ENCODE measurements at regions of chr12 and their contacts with region 1.

Region 1: DNA sequence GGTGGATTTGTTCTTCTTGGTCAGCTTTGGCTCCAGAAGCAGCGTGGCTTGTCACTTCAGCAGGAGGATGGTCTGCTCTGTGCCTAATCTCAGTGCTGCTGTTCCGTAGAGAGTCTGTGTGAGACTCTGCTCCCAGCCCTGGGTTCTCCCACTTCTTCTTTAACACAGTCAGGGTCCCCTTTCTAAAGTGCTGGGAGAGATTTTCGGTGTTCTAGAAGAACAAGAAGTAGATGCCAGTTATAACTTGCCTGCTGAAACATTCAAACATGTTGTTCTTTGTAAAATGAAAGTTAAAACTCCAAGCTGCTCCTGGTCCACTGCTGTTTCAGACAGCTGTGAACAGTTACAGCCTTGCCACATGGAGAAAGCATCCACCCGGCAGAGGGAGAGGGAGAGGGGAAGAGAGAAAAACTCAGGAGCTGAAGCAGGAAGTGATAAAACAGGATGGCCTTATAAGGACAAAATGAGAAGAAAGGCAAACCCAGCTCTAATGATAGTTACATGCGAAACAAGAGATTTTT is 55.2 kb upstream of the CERS5 start:
- DNase-seq: no peak
- H3K4me3 Mint-ChIP-seq: no peak overlapping the region
- H3K27ac Mint-ChIP-seq: no peak overlapping the region
- H3K4me1 Mint-ChIP-seq: no peaks in the 10 kb centered on the region
- H3K27me3 Mint-ChIP-seq: no peaks in the 10 kb centered on the region
- CTCF ChIP-seq: no peak

Region 2: GRCh38 chr12:50167041-50167828 is 55.1 kb before region 1 on chr12 and contains the start of gene CERS5:
- CTCF ChIA-PET with region 1: interaction called, 11 read pairs
- intact Hi-C with region 1: no loop called
- DNase-seq: peak; percentile 97
- H3K4me3 Mint-ChIP-seq: peak within 1 kb of the TSS; percentile 79
- H3K27ac Mint-ChIP-seq: peak within 1 kb of the TSS; percentile 12
- H3K4me1 Mint-ChIP-seq: peaks cover 9% of the 10 kb centered on the region
- H3K27me3 Mint-ChIP-seq: no peaks in the 10 kb centered on the region
- CTCF ChIP-seq: no peak
- total RNA-seq, gene CERS5: 27.3 and 28.2 TPM in 2 replicates

Region 3: GRCh38 chr12:50257686-50258551 is 35.6 kb after region 1 on chr12:
- CTCF ChIA-PET with region 1: interaction called, 3 read pairs
- intact Hi-C with region 1: loop called (anchors 5 kb)
- DNase-seq: no peak
- H3K4me3 Mint-ChIP-seq: peak overlapping the region; percentile 31
- H3K27ac Mint-ChIP-seq: peak overlapping the region; percentile 92
- H3K4me1 Mint-ChIP-seq: peaks cover 75% of the 10 kb centered on the region
- H3K27me3 Mint-ChIP-seq: no peaks in the 10 kb centered on the region
- CTCF ChIP-seq: no peak